ENCODE measurements at regions of chr9 and their contacts with region 1.

Region 1: GRCh38 chr9:5518171-5518936 is 8.0 kb downstream of the PDCD1LG2 start:
- DNase-seq: no peak
- ATAC-seq: peak; percentile 70
- H3K4me3 Mint-ChIP-seq: no peak overlapping the region
- H3K27ac Mint-ChIP-seq: peak overlapping the region; percentile 36
- H3K4me1 Mint-ChIP-seq: peaks cover 28% of the 10 kb centered on the region
- H3K27me3 Mint-ChIP-seq: peaks cover 1% of the 10 kb centered on the region
- CTCF ChIP-seq: no peak

Region 2: GRCh38 chr9:5459289-5459829 is 59.0 kb before region 1 on chr9:
- CTCF ChIA-PET with region 1: no interaction called
- POLR2A ChIA-PET with region 1: no interaction called
- intact Hi-C with region 1: loop called (anchors 5 kb)
- DNase-seq: peak; percentile 31
- ATAC-seq: peak; percentile 69
- H3K4me3 Mint-ChIP-seq: peak overlapping the region; percentile 43
- H3K27ac Mint-ChIP-seq: peak overlapping the region; percentile 78
- H3K4me1 Mint-ChIP-seq: peaks cover 62% of the 10 kb centered on the region
- H3K27me3 Mint-ChIP-seq: no peaks in the 10 kb centered on the region
- CTCF ChIP-seq: no peak